ENCODE measurements at regions of chr3 and their contacts with region 1.

Region 1: DNA sequence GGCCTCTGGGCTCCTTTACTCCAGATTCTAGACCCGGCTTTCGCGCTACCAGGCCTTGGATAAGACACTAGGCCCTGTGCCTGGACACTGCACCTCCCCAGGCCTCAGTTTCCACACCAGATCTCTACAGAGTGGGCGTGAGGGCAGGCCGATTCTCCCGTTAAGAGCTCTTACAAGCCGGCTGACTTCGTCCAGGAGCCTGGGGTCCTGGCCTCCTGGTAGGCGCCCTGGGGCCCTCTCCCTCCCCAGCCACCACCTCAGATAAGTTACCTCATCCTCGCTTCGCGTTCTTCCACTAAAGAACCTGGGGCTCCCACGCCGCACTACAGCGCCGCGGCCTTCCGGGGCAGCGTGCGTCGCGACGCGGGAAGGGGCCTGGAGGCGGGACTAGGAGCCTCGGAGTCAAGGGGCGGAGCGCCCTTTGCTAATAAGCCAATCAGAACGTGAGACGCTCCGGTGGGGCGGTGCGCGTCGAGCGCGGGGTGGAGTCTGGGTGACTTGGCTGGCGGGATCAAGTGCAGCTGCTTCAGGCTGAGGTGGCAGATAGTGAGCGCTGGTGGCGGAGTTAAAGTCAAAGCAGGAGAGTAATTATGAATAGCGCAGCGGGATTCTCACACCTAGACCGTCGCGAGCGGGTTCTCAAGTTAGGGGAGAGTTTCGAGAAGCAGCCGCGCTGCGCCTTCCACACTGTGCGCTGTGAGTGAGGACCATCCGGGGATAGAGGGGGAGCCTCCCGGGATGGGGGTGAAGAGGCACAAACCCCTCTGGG is at the starts of genes EAF2 and IQCB1:
- DNase-seq: peak; percentile 97 to 98 (median 97)
- H3K4me3 ChIP-seq: peak within 1 kb of the TSS; percentile 83 to 96
- H3K4me3 Mint-ChIP-seq: peak within 1 kb of the TSS; percentile 92 to 98 (median 94)
- H3K27ac ChIP-seq: peak within 1 kb of the TSS; percentile 84
- H3K27ac Mint-ChIP-seq: peak within 1 kb of the TSS; percentile 77 to 98 (median 94)
- H3K4me1 ChIP-seq: peaks cover 30% of the 10 kb centered on the region
- H3K4me1 Mint-ChIP-seq: peaks cover 32 to 54% (median 44%) of the 10 kb centered on the region in 4 donors
- H3K27me3 ChIP-seq: no peaks in the 10 kb centered on the region
- H3K27me3 Mint-ChIP-seq: no peaks in the 10 kb centered on the region
- total RNA-seq, gene EAF2: 5.7 to 6.3 TPM
- total RNA-seq, gene IQCB1: 37.9 to 38.2 TPM

Region 2: GRCh38 chr3:121660356-121661171 is 174.3 kb before region 1 on chr3 and contains the start of gene HCLS1:
- CTCF ChIA-PET with region 1: no interaction called
- POLR2A ChIA-PET with region 1: interaction called, 3 read pairs
- intact Hi-C with region 1: loop called (anchors 1 kb)
- DNase-seq: peak; percentile 80 to 86 (median 83)
- H3K4me3 ChIP-seq: peak within 1 kb of the TSS; percentile 58 to 76
- H3K4me3 Mint-ChIP-seq: peak within 1 kb of the TSS; percentile 91 to 99 (median 94)
- H3K27ac ChIP-seq: peak within 1 kb of the TSS; percentile 85
- H3K27ac Mint-ChIP-seq: peak within 1 kb of the TSS; percentile 95 to 100 (median 99)
- H3K4me1 ChIP-seq: peaks cover 42% of the 10 kb centered on the region
- H3K4me1 Mint-ChIP-seq: peaks cover 36 to 62% (median 50%) of the 10 kb centered on the region in 4 donors
- H3K27me3 ChIP-seq: no peaks in the 10 kb centered on the region
- H3K27me3 Mint-ChIP-seq: no peaks in the 10 kb centered on the region
- total RNA-seq, gene HCLS1: 336 TPM

Region 3: GRCh38 chr3:121852256-121852655 is 17.4 kb after region 1 on chr3:
- CTCF ChIA-PET with region 1: interaction called, 3 read pairs
- POLR2A ChIA-PET with region 1: interaction called, 3 read pairs
- intact Hi-C with region 1: loop called (anchors 1 kb)
- DNase-seq: no peak
- H3K4me3 ChIP-seq: no peak overlapping the region
- H3K4me3 Mint-ChIP-seq: no peak overlapping the region
- H3K27ac ChIP-seq: no peak overlapping the region
- H3K27ac Mint-ChIP-seq: no peak overlapping the region
- H3K4me1 ChIP-seq: no peaks in the 10 kb centered on the region
- H3K4me1 Mint-ChIP-seq: no peaks in the 10 kb centered on the region
- H3K27me3 ChIP-seq: no peaks in the 10 kb centered on the region
- H3K27me3 Mint-ChIP-seq: no peaks in the 10 kb centered on the region

Region 4: GRCh38 chr3:122514123-122515019 is 679.5 kb after region 1 on chr3 and contains the start of gene KPNA1:
- CTCF ChIA-PET with region 1: no interaction called
- POLR2A ChIA-PET with region 1: interaction called, 4 read pairs
- intact Hi-C with region 1: loop called (anchors 10 kb)
- DNase-seq: peak; percentile 86 to 92 (median 90)
- H3K4me3 ChIP-seq: peak within 1 kb of the TSS; percentile 58 to 71
- H3K4me3 Mint-ChIP-seq: peak within 1 kb of the TSS; percentile 90 to 95 (median 93)
- H3K27ac ChIP-seq: peak within 1 kb of the TSS; percentile 97
- H3K27ac Mint-ChIP-seq: peak within 1 kb of the TSS; percentile 91 to 98 (median 96)
- H3K4me1 ChIP-seq: peaks cover 30% of the 10 kb centered on the region
- H3K4me1 Mint-ChIP-seq: peaks cover 24 to 51% (median 36%) of the 10 kb centered on the region in 4 donors
- H3K27me3 ChIP-seq: no peaks in the 10 kb centered on the region
- H3K27me3 Mint-ChIP-seq: no peaks in the 10 kb centered on the region
- total RNA-seq, gene KPNA1: 67.4 to 71.5 TPM

Measured in CD4-positive, alpha-beta memory T cell (primary cell).